Posterior cingulate gyrus (tissue), 11 donors: ENCODE measurements at regions of chr14 and their contacts with region 1.

Region 1: GRCh38 chr14:99982537-99983250 is 82.5 kb upstream of the EVL start:
- DNase-seq: peak in 6 of 10 donors; percentile 33 to 92 (median 62)

Region 2: GRCh38 chr14:100117633-100118395 is 135.1 kb after region 1 on chr14:
- intact Hi-C with region 1: loop called (anchors 5 kb)
- DNase-seq: peak in 2 of 10 donors; percentile 39 to 55

Region 3: GRCh38 chr14:100192672-100193416 is 210.2 kb after region 1 on chr14:
- intact Hi-C with region 1: loop called (anchors 1 kb)
- DNase-seq: peak; percentile 96 to 100 (median 99)

Region 4: GRCh38 chr14:100306420-100307219 is 323.9 kb after region 1 on chr14 and contains the start of gene SLC25A29:
- intact Hi-C with region 1: loop called (anchors 10 kb)
- DNase-seq: peak; percentile 86 to 99 (median 91)